A549 (cell line): ENCODE measurements at regions of chr1 and their contacts with region 1.

Region 1: DNA sequence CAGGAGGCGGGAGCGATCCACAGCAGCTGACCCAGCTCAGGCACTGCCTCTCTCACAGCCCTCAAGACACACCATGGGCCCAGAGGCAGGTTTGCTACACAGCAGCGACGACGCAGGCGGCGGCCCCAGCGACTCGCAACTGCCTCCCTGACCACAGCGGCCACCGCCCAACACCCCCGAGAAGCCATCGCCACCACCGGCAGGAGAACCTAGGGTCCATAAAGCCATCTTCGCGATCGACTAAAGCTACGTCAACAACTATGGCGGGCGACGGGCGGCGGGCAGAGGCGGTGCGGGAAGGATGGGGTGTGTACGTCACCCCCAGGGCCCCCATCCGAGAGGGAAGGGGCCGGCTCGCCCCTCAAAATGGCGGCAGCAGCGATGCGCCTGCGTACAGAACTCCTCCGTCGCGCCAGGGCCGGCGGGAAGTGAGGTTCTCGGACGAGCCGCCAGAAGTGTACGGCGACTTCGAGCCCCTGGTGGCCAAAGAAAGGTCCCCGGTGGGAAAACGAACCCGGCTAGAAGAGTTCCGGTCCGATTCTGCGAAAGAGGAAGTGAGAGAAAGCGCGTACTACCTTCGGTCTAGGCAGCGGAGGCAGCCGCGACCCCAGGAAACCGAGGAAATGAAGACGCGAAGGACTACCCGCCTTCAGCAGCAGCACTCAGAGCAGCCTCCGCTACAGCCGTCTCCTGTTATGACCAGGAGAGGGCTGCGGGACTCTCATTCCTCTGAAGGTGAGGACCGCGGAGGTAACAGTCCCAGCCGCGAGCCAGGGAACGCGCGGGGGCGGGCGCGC is at the start of gene TOR1AIP1:
- DNase-seq: peak; percentile 84 to 99
- ATAC-seq: peak; percentile 89
- H3K4me3 ChIP-seq: peak within 1 kb of the TSS; percentile 63
- H3K27ac ChIP-seq: peak within 1 kb of the TSS; percentile 98
- H3K4me1 ChIP-seq: peaks cover 29% of the 10 kb centered on the region
- CTCF ChIP-seq: no peak
- EP300 ChIP-seq: no peak
- POLR2A ChIP-seq: peak; percentile 89
- RAD21 ChIP-seq: peak in 1 of 2 experiments; percentile 22; a peak in 1 of 5 replicates
- polyA plus RNA-seq, gene TOR1AIP1: 38.4 and 44.4 TPM in 2 replicates

Region 2: GRCh38 chr1:179848233-179848632 is 34.2 kb before region 1 on chr1:
- CTCF ChIA-PET with region 1: no interaction called
- POLR2A ChIA-PET with region 1: no interaction called
- DNase-seq: no peak
- ATAC-seq: no peak
- H3K4me3 ChIP-seq: no peak overlapping the region
- H3K27ac ChIP-seq: no peak overlapping the region
- H3K4me1 ChIP-seq: no peaks in the 10 kb centered on the region
- CTCF ChIP-seq: no peak
- EP300 ChIP-seq: no peak
- POLR2A ChIP-seq: no peak
- RAD21 ChIP-seq: no peak

Region 3: DNA sequence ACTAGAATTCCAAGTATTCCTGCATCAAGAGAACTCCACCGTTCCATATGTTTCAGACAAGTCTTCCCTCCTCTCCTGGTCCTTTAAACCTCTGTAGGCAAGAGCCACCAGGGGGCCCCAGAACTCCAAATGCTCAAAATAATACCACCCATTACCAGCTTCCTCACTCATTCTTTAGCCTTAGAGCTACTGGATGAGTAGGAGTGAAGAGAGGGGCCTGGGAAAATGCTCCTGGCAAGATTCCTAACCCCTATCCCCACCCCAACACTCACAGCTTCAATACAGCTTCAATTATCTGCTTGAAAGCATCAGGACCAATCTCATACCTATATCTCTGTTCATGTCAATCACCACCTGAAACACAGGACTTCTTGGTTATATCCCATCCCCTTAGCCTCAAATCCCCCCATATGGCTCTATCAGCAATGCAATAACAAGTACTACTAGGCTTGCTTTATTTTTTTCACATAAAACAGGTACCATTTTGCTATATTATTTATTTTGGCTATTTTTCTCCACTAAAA is 14.6 kb before region 1 on chr1:
- CTCF ChIA-PET with region 1: interaction called, 14 read pairs
- POLR2A ChIA-PET with region 1: no interaction called
- DNase-seq: peak; percentile 54 to 64
- ATAC-seq: peak; percentile 96 to 98
- H3K4me3 ChIP-seq: no peak overlapping the region
- H3K27ac ChIP-seq: no peak overlapping the region
- H3K4me1 ChIP-seq: peaks cover under 1% of the 10 kb centered on the region; the same call in 1 of the 3 replicates
- CTCF ChIP-seq: peak; percentile 81
- EP300 ChIP-seq: no peak
- POLR2A ChIP-seq: no peak
- RAD21 ChIP-seq: peak; percentile 75

Region 4: GRCh38 chr1:179910934-179911333 is 28.5 kb after region 1 on chr1:
- CTCF ChIA-PET with region 1: interaction called, 3 read pairs
- POLR2A ChIA-PET with region 1: interaction called, 10 read pairs
- DNase-seq: no peak
- ATAC-seq: no peak
- H3K4me3 ChIP-seq: no peak overlapping the region
- H3K27ac ChIP-seq: no peak overlapping the region
- H3K4me1 ChIP-seq: no peaks in the 10 kb centered on the region
- CTCF ChIP-seq: no peak
- EP300 ChIP-seq: no peak
- POLR2A ChIP-seq: no peak
- RAD21 ChIP-seq: no peak

Region 5: GRCh38 chr1:179921472-179921871 is 39.0 kb after region 1 on chr1:
- CTCF ChIA-PET with region 1: no interaction called
- POLR2A ChIA-PET with region 1: interaction called, 10 read pairs
- DNase-seq: no peak
- ATAC-seq: no peak
- H3K4me3 ChIP-seq: no peak overlapping the region
- H3K27ac ChIP-seq: no peak overlapping the region
- H3K4me1 ChIP-seq: peaks cover 3% of the 10 kb centered on the region; the same call in 1 of the 3 replicates
- CTCF ChIP-seq: no peak
- EP300 ChIP-seq: no peak
- POLR2A ChIP-seq: no peak
- RAD21 ChIP-seq: no peak

Region 6: GRCh38 chr1:179954493-179955297 is 72.3 kb after region 1 on chr1 and contains the start of gene CEP350:
- CTCF ChIA-PET with region 1: interaction called, 3 read pairs
- POLR2A ChIA-PET with region 1: interaction called, 28 read pairs
- DNase-seq: peak; percentile 77 to 99
- ATAC-seq: peak; percentile 89 to 97
- H3K4me3 ChIP-seq: peak within 1 kb of the TSS; percentile 68
- H3K27ac ChIP-seq: peak within 1 kb of the TSS; percentile 79 to 97
- H3K4me1 ChIP-seq: peaks cover 17% of the 10 kb centered on the region
- CTCF ChIP-seq: no peak
- EP300 ChIP-seq: no peak
- POLR2A ChIP-seq: peak; percentile 86
- RAD21 ChIP-seq: no peak; a peak in 1 of 5 replicates
- polyA plus RNA-seq, gene CEP350: 21.4 and 22.6 TPM in 2 replicates

Region 7: GRCh38 chr1:180003026-180003695 is 120.7 kb after region 1 on chr1:
- CTCF ChIA-PET with region 1: no interaction called
- POLR2A ChIA-PET with region 1: no interaction called
- DNase-seq: no peak
- ATAC-seq: no peak
- H3K4me3 ChIP-seq: no peak overlapping the region
- H3K27ac ChIP-seq: no peak overlapping the region
- H3K4me1 ChIP-seq: no peaks in the 10 kb centered on the region
- CTCF ChIP-seq: no peak
- EP300 ChIP-seq: no peak
- POLR2A ChIP-seq: no peak
- RAD21 ChIP-seq: no peak

Region 8: GRCh38 chr1:180154325-180155181 is 272.1 kb after region 1 on chr1 and contains the start of gene QSOX1:
- CTCF ChIA-PET with region 1: no interaction called
- POLR2A ChIA-PET with region 1: interaction called, 12 read pairs
- DNase-seq: peak; percentile 86 to 91
- ATAC-seq: peak; percentile 86 to 89
- H3K4me3 ChIP-seq: peak within 1 kb of the TSS; percentile 90
- H3K27ac ChIP-seq: peak within 1 kb of the TSS; percentile 96 to 97
- H3K4me1 ChIP-seq: peaks cover 34% of the 10 kb centered on the region
- CTCF ChIP-seq: no peak
- EP300 ChIP-seq: no peak
- POLR2A ChIP-seq: peak; percentile 95
- RAD21 ChIP-seq: no peak; a peak in 1 of 5 replicates
- polyA plus RNA-seq, gene QSOX1: 60.2 and 67.3 TPM in 2 replicates